ENCODE measurements at regions of chr14 and their contacts with region 1.

Region 1: DNA sequence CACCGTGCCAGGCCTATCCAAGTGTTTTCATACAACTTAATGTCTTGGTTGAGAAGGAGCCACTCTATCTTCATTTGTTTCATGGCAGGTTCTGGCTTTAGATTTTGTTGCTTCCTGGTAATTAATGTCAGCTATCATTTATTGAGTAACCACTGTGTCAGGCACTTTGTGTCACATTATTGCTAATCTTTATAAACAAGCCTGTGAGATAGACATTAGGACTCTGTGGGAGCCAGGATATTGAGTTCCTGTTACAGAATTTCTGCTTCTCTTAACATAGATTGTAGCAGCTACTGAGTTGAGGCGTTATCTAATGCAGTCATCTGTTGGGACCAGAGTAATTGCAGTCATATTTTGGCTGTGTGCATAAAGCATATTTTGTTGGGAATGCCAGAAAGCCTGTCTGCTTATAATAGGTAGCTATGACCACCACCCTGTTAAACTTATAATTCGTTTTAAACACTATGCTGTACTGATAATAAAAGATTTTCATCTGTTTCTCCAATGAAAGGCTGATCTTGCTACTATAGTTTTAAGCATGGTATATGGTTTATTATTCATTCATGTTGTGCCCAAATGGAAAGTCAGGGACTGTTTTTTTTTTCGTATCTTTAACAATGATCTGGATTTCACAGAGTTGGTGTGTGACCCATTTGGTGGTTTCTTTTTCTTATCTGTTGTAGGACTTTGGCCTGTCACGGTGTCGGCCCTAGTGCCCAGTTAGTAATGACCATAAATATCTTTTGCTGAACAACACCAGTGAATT is 432.6 kb downstream of the PCNX1 start:
- DNase-seq: no peak
- ATAC-seq: no peak
- H3K4me3 Mint-ChIP-seq: no peak overlapping the region
- H3K27ac Mint-ChIP-seq: no peak overlapping the region
- H3K4me1 Mint-ChIP-seq: peaks cover 77% of the 10 kb centered on the region
- H3K27me3 Mint-ChIP-seq: no peaks in the 10 kb centered on the region
- CTCF ChIP-seq: no peak

Region 2: GRCh38 chr14:70873627-70874026 is 466.2 kb before region 1 on chr14:
- CTCF ChIA-PET with region 1: no interaction called
- POLR2A ChIA-PET with region 1: no interaction called
- intact Hi-C with region 1: no loop called
- DNase-seq: no peak
- ATAC-seq: no peak
- H3K4me3 Mint-ChIP-seq: no peak overlapping the region
- H3K27ac Mint-ChIP-seq: no peak overlapping the region
- H3K4me1 Mint-ChIP-seq: peaks cover 6% of the 10 kb centered on the region
- H3K27me3 Mint-ChIP-seq: no peaks in the 10 kb centered on the region
- CTCF ChIP-seq: no peak

Region 3: GRCh38 chr14:71328183-71328582 is 11.7 kb before region 1 on chr14:
- CTCF ChIA-PET with region 1: no interaction called
- POLR2A ChIA-PET with region 1: interaction called, 4 read pairs
- intact Hi-C with region 1: loop called (anchors 1 kb)
- DNase-seq: no peak
- ATAC-seq: peak; percentile 16
- H3K4me3 Mint-ChIP-seq: no peak overlapping the region
- H3K27ac Mint-ChIP-seq: peak overlapping the region; percentile 12
- H3K4me1 Mint-ChIP-seq: peaks cover 89% of the 10 kb centered on the region
- H3K27me3 Mint-ChIP-seq: no peaks in the 10 kb centered on the region
- CTCF ChIP-seq: no peak

Region 4: GRCh38 chr14:71355324-71356201 is 15.7 kb after region 1 on chr14:
- CTCF ChIA-PET with region 1: no interaction called
- POLR2A ChIA-PET with region 1: interaction called, 5 read pairs
- intact Hi-C with region 1: loop called (anchors 1 kb)
- DNase-seq: no peak
- ATAC-seq: peak; percentile 19
- H3K4me3 Mint-ChIP-seq: peak overlapping the region; percentile 54
- H3K27ac Mint-ChIP-seq: peak overlapping the region; percentile 87
- H3K4me1 Mint-ChIP-seq: peaks cover 85% of the 10 kb centered on the region
- H3K27me3 Mint-ChIP-seq: no peaks in the 10 kb centered on the region
- CTCF ChIP-seq: no peak

Region 5: GRCh38 chr14:71651228-71651627 is 311.4 kb after region 1 on chr14:
- CTCF ChIA-PET with region 1: no interaction called
- POLR2A ChIA-PET with region 1: no interaction called
- intact Hi-C with region 1: no loop called
- DNase-seq: no peak
- ATAC-seq: no peak
- H3K4me3 Mint-ChIP-seq: no peak overlapping the region
- H3K27ac Mint-ChIP-seq: no peak overlapping the region
- H3K4me1 Mint-ChIP-seq: no peaks in the 10 kb centered on the region
- H3K27me3 Mint-ChIP-seq: no peaks in the 10 kb centered on the region
- CTCF ChIP-seq: no peak